IMR-90 (cell line): ENCODE measurements at regions of chr3 and their contacts with region 1.

Region 1: DNA sequence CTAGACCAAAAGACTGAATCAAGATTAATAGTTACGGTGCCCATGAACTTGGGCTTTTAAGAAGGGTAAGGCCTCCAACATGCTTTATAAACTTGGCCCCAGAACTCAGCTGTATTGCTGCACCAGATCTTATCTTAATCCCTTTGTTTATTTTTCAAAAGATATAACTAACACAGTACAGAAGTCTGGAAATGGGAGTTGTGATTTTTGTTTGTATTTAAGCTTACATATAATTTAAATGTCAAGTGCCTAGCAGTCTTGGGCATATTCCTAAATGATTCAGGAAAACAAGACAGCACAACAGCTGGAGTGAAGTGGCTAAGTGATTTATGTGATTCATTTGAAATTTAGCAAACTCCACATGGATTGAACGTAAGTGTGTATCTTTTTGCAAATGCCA is 56.2 kb downstream of the NBEAL2 start:
- DNase-seq: peak; percentile 63
- ATAC-seq: peak; percentile 90
- H3K4me3 ChIP-seq: no peak overlapping the region
- H3K27ac ChIP-seq: no peak overlapping the region
- H3K4me1 ChIP-seq: peaks cover 8% of the 10 kb centered on the region
- H3K27me3 ChIP-seq: no peaks in the 10 kb centered on the region
- CTCF ChIP-seq: no peak
- POLR2A ChIP-seq: no peak
- RAD21 ChIP-seq: no peak

Region 2: DNA sequence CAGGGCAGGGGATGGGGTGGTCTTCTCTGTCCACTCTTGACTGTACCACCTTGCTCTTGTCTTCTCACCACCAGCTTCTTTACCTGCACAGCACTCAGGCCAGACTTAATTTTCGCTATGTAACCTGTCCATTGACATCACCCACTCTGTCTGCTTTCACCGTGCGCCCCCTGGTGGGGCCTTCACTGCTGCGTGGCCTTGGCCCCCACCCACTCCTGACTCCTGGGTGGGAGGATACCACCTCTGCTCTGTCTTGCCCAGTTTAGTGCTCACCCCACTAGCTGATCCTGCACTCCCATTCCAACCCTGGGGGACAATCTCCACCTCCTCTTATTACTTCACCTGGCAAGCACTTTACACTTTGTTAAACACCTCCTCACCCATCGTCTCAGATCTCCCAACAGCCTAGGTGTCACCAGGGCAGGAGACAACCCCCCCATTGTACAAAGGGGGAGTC is 140.4 kb before region 1 on chr3:
- CTCF ChIA-PET with region 1: no interaction called
- POLR2A ChIA-PET with region 1: no interaction called
- dilution Hi-C with region 1: no loop called
- in situ Hi-C with region 1: no loop called
- intact Hi-C with region 1: no loop called
- DNase-seq: peak; percentile 34
- ATAC-seq: peak; percentile 52
- H3K4me3 ChIP-seq: no peak overlapping the region
- H3K27ac ChIP-seq: no peak overlapping the region
- H3K4me1 ChIP-seq: no peaks in the 10 kb centered on the region; the same call in 1 of the 2 replicates
- H3K27me3 ChIP-seq: peaks cover 29% of the 10 kb centered on the region
- CTCF ChIP-seq: peak; percentile 81
- POLR2A ChIP-seq: no peak
- RAD21 ChIP-seq: peak; percentile 80

Region 3: DNA sequence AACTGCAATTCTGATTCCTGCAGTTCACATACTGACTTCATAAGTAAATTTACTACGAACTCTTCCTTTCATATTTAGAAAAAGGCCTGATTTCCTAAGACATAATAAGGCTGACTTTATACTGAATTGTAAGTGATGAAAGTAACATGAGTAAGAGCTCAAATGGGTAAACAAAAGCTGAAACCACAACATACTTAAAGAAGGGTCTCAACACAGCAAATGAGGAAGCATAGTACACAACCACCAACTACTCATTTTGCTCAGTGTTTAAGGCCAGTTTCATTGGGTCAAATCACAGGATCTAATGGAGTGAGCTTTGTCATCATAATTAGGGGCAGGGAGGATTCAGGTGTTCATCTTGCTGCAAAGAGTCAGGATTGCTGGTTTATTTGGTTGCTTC is 46.9 kb after region 1 on chr3:
- CTCF ChIA-PET with region 1: interaction called, 3 read pairs
- POLR2A ChIA-PET with region 1: no interaction called
- dilution Hi-C with region 1: no loop called
- in situ Hi-C with region 1: no loop called
- intact Hi-C with region 1: loop called (anchors 5 kb)
- DNase-seq: peak; percentile 89
- ATAC-seq: peak; percentile 94
- H3K4me3 ChIP-seq: no peak overlapping the region
- H3K27ac ChIP-seq: no peak overlapping the region
- H3K4me1 ChIP-seq: peaks cover 10% of the 10 kb centered on the region
- H3K27me3 ChIP-seq: no peaks in the 10 kb centered on the region
- CTCF ChIP-seq: no peak
- POLR2A ChIP-seq: no peak
- RAD21 ChIP-seq: 0 out of 2 replicates have a peak, but pooled peaks have one; percentile 1

Region 4: GRCh38 chr3:47250309-47251060 is 214.9 kb after region 1 on chr3:
- CTCF ChIA-PET with region 1: no interaction called
- POLR2A ChIA-PET with region 1: no interaction called
- dilution Hi-C with region 1: no loop called
- in situ Hi-C with region 1: no loop called
- intact Hi-C with region 1: loop called (anchors 1 kb)
- DNase-seq: peak; percentile 23
- ATAC-seq: peak; percentile 73
- H3K4me3 ChIP-seq: no peak overlapping the region
- H3K27ac ChIP-seq: no peak overlapping the region
- H3K4me1 ChIP-seq: no peaks in the 10 kb centered on the region
- H3K27me3 ChIP-seq: peaks cover 5% of the 10 kb centered on the region
- CTCF ChIP-seq: peak; percentile 42
- POLR2A ChIP-seq: no peak
- RAD21 ChIP-seq: peak; percentile 47

Region 5: DNA sequence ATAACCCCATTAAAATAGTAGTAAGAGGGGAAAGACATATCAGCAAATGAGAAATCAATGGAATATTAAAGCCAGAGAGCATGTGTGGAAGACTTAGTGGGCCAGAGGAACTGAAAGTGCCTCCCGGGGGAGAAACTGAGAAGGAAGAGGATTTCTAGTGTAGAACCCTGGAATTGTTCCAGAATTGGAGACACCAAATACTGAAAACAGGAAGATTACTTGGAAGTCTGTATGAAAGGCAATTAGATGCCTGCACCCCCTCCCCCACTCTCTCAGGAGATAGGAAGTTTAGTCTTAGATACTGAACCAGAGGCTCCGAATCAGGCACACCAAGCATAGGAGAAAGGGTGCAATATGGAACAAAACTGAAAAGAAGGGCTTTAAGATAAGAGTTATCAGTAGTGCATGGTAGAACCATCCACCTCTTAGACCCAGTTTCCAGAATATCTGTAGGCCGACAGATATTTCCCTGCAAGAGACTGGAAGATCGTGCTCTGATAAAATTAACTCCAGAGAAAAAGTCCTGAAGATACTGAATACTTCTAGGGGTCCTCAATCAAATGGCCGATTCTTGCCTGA is 279.5 kb after region 1 on chr3:
- CTCF ChIA-PET with region 1: no interaction called
- POLR2A ChIA-PET with region 1: no interaction called
- dilution Hi-C with region 1: no loop called
- in situ Hi-C with region 1: no loop called
- intact Hi-C with region 1: loop called (anchors 5 kb)
- DNase-seq: peak; percentile 7
- ATAC-seq: no peak
- H3K4me3 ChIP-seq: no peak overlapping the region
- H3K27ac ChIP-seq: no peak overlapping the region
- H3K4me1 ChIP-seq: peaks cover 13% of the 10 kb centered on the region
- H3K27me3 ChIP-seq: no peaks in the 10 kb centered on the region
- CTCF ChIP-seq: no peak
- POLR2A ChIP-seq: no peak
- RAD21 ChIP-seq: no peak

Region 6: GRCh38 chr3:47347217-47347801 is 311.7 kb after region 1 on chr3:
- CTCF ChIA-PET with region 1: no interaction called
- POLR2A ChIA-PET with region 1: no interaction called
- dilution Hi-C with region 1: no loop called
- in situ Hi-C with region 1: no loop called
- intact Hi-C with region 1: no loop called
- DNase-seq: peak; percentile 79
- ATAC-seq: peak; percentile 91
- H3K4me3 ChIP-seq: no peak overlapping the region
- H3K27ac ChIP-seq: no peak overlapping the region
- H3K4me1 ChIP-seq: peaks cover 13% of the 10 kb centered on the region
- H3K27me3 ChIP-seq: no peaks in the 10 kb centered on the region
- CTCF ChIP-seq: no peak
- POLR2A ChIP-seq: no peak
- RAD21 ChIP-seq: no peak